Ovary (tissue), 10 donors: ENCODE measurements at regions of chr15 and their contacts with region 1.

Region 1: GRCh38 chr15:74842581-74843444 is at the start of gene ULK3:
- DNase-seq: peak; percentile 91 to 95 (median 92)
- H3K4me3 ChIP-seq: peak within 1 kb of the TSS; percentile 57
- H3K27ac ChIP-seq: peak within 1 kb of the TSS; percentile 69 to 90
- H3K4me1 ChIP-seq: peaks cover 4% of the 10 kb centered on the region
- H3K27me3 ChIP-seq: no peaks in the 10 kb centered on the region
- CTCF ChIP-seq: peak; percentile 60 to 97 (median 96)
- EP300 ChIP-seq: no peak
- POLR2A ChIP-seq: peak; percentile 10
- total RNA-seq, gene ULK3: 25.2 to 45.7 (median 27.8) TPM

Region 2: DNA sequence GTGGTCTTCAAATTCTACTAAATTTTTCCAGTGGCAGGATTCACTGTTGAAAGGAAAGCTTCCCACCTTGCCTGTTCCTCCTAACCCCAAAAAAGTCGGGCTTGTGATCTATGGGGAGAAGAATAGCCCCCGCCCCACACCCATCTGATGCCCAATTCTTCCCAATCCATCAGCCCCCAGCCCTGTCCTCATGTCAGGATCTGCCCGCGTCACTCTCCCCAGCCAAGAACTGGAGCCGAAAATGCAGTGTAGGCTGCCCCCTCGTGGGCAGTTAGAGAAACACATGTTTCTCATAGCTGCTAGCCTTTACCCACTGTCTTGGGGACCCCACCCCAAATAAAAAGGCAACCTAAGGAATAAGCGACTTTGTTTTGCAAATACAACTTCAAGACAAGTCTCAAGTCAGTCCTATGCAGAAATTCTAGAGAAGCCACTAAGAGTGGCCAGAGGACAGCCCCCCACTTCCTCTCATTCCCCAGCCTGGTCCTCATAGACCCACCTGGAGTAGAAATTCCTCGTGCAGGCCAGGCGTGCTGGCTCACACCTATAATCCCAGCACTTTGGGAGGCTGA is 74.0 kb before region 1 on chr15:
- intact Hi-C with region 1: no loop called
- DNase-seq: peak; percentile 50 to 69 (median 67)
- H3K4me3 ChIP-seq: no peak overlapping the region
- H3K27ac ChIP-seq: no peak overlapping the region
- H3K4me1 ChIP-seq: no peaks in the 10 kb centered on the region
- H3K27me3 ChIP-seq: no peaks in the 10 kb centered on the region
- CTCF ChIP-seq: peak; percentile 65 to 79 (median 78)
- EP300 ChIP-seq: no peak
- POLR2A ChIP-seq: no peak

Region 3: GRCh38 chr15:74906446-74907162 is 63.8 kb after region 1 on chr15 and contains the start of gene FAM219B:
- intact Hi-C with region 1: loop called in 2 of 4 experiments (anchors 2 to 10 kb)
- DNase-seq: peak; percentile 90 to 94 (median 92)
- H3K4me3 ChIP-seq: peak within 1 kb of the TSS; percentile 76
- H3K27ac ChIP-seq: peak within 1 kb of the TSS; percentile 73 to 78
- H3K4me1 ChIP-seq: peaks cover 5% of the 10 kb centered on the region
- H3K27me3 ChIP-seq: no peaks in the 10 kb centered on the region
- CTCF ChIP-seq: no peak
- EP300 ChIP-seq: no peak
- POLR2A ChIP-seq: peak; percentile 93
- total RNA-seq, gene FAM219B: 31.0 to 125 (median 67.4) TPM